Activated CD4-positive, alpha-beta memory T cell treated with anti-CD3 and anti-CD28 coated beads for 36 hours (primary cell): ENCODE measurements at regions of chr6 and their contacts with region 1.

Region 1: DNA sequence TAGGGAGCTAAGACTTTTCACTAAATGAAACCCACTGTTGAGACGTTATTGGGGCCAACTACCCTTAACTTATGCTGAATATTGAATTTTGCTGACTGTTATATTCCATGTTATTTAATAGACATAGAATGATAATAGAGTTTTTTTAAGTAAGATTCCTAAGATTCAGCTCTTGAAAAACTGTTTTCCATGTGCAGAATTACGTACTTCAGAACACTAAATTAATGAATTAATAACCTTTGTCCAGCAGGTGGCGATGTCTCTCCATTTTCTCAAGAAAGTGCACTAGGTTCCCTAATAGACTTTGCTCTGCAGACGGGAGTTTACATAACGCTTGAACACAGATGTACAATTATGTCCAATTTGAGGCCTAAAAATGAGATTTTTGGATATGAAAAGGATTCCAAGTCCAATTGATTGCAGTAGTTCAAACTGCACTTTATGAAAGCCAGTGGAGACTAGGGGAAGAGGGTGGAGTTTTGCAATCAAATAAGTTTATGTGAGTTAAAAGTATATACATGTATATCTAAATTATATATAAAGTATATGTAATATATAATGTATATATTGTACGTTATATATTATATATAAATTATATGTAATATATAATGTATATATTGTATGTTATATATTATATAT is 282.1 kb downstream of the UST start:
- DNase-seq: peak; percentile 65
- H3K4me3 Mint-ChIP-seq: peak overlapping the region; percentile 47
- H3K27ac Mint-ChIP-seq: peak overlapping the region; percentile 72
- H3K4me1 Mint-ChIP-seq: peaks cover 48% of the 10 kb centered on the region
- H3K27me3 Mint-ChIP-seq: no peaks in the 10 kb centered on the region

Region 2: DNA sequence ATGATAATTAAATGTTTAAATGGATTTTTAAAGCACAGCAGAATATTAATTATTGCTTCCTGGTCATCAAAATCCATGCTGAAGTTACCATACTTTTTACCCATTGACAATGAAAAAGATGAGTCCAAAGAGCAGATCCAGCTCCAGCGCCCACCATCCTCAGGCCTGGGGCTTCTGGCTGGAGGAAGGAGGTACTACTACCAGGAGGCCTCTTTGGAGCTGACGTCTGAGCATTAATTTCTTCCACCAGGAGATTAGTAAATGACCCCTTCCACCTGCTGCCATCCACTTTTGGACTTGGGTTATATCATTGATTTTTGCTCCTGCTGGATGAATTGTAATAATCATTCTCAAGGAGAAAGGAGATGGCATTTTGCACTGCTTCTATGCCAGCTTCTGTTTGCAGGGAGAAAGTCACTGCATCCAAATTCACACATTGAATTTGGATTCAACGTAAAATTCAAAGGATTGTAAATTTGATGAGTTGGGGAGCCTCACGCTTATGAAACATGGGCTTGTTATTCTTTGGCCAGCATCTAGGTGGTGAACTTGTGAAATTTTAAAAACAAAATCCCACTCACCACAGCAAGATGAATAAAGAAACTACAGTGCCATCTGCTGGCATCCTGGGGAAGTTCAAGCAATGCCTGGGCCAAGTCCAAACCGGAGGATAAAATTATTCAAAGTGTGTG is 564.4 kb before region 1 on chr6:
- CTCF ChIA-PET with region 1: no interaction called
- POLR2A ChIA-PET with region 1: no interaction called
- intact Hi-C with region 1: no loop called
- DNase-seq: peak; percentile 67
- H3K4me3 Mint-ChIP-seq: no peak overlapping the region
- H3K27ac Mint-ChIP-seq: no peak overlapping the region
- H3K4me1 Mint-ChIP-seq: no peaks in the 10 kb centered on the region
- H3K27me3 Mint-ChIP-seq: peaks cover 10% of the 10 kb centered on the region

Region 3: GRCh38 chr6:148578245-148578732 is 450.6 kb before region 1 on chr6:
- CTCF ChIA-PET with region 1: interaction called, 20 read pairs
- POLR2A ChIA-PET with region 1: no interaction called
- intact Hi-C with region 1: loop called (anchors 2 kb)
- DNase-seq: peak; percentile 73
- H3K4me3 Mint-ChIP-seq: no peak overlapping the region
- H3K27ac Mint-ChIP-seq: no peak overlapping the region
- H3K4me1 Mint-ChIP-seq: peaks cover 6% of the 10 kb centered on the region
- H3K27me3 Mint-ChIP-seq: peaks cover 27% of the 10 kb centered on the region

Region 4: GRCh38 chr6:148972481-148972880 is 56.4 kb before region 1 on chr6:
- CTCF ChIA-PET with region 1: no interaction called
- POLR2A ChIA-PET with region 1: no interaction called
- intact Hi-C with region 1: no loop called
- DNase-seq: peak; percentile 68
- H3K4me3 Mint-ChIP-seq: no peak overlapping the region
- H3K27ac Mint-ChIP-seq: no peak overlapping the region
- H3K4me1 Mint-ChIP-seq: no peaks in the 10 kb centered on the region
- H3K27me3 Mint-ChIP-seq: no peaks in the 10 kb centered on the region

Region 5: DNA sequence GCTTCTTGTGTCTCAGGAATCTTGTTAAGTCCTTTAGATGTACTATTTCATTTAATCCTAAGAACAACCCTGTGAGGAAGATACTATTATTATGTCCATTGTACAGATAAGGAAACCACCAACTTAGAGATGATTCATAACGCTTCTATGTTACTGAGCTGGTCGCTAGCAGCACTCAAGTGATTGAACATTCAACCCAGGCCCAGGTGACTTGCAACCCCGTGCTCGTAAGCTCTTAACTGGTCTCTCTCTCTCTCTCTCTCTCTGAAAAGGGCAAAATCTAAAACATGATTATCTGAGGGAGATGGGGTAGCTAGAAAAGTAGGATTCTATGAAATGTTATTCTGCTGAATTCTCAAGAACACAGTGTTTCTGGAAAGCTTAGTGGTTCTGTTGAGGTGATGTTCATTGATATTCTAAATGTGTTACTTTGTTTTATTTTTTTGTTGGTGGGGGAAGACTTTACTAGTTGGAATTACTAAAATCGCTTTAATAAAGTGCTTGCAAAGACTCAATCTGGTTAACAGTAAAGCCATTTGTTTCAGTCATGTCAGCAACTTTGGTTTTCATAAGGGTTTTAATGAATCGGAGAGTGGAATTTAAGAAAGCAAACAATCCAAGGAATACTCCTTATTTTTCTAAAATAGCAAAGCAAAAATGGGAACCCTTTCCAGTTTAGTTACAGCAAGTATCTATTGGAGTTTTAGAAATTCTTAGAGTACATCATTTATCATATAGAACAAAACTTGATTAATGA is 23.6 kb after region 1 on chr6:
- CTCF ChIA-PET with region 1: interaction called, 5 read pairs
- POLR2A ChIA-PET with region 1: interaction called, 10 read pairs
- intact Hi-C with region 1: no loop called
- DNase-seq: peak; percentile 42
- H3K4me3 Mint-ChIP-seq: peak overlapping the region; percentile 9
- H3K27ac Mint-ChIP-seq: peak overlapping the region; percentile 10
- H3K4me1 Mint-ChIP-seq: peaks cover 40% of the 10 kb centered on the region
- H3K27me3 Mint-ChIP-seq: no peaks in the 10 kb centered on the region

Region 6: DNA sequence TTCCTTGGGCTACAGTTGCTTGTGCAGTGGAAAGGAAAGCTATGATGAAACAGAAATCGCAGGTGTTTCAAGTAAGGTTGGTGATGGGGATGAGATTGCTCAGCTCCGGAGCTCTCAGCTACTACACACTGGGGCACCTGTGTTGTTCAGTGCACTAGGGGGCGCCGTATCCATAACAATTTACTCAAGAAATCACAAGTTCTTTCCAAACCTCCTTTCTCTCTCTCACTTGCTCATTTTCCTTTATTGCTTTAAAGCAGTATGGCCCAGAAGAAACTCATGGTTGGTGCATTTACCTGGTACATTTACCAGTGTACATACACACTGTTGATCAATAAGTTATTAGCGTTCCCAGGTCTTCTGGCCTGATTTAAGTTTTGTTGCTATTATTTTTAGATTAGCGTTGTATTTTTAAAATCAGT is 53.4 kb after region 1 on chr6:
- CTCF ChIA-PET with region 1: interaction called, 29 read pairs
- POLR2A ChIA-PET with region 1: interaction called, 62 read pairs
- intact Hi-C with region 1: loop called (anchors 1 kb)
- DNase-seq: peak; percentile 93
- H3K4me3 Mint-ChIP-seq: no peak overlapping the region
- H3K27ac Mint-ChIP-seq: peak overlapping the region; percentile 26
- H3K4me1 Mint-ChIP-seq: peaks cover 79% of the 10 kb centered on the region
- H3K27me3 Mint-ChIP-seq: no peaks in the 10 kb centered on the region

Region 7: GRCh38 chr6:149211046-149211571 is 182.2 kb after region 1 on chr6:
- CTCF ChIA-PET with region 1: no interaction called
- POLR2A ChIA-PET with region 1: interaction called, 6 read pairs
- intact Hi-C with region 1: loop called (anchors 5 kb)
- DNase-seq: peak; percentile 54
- H3K4me3 Mint-ChIP-seq: peak overlapping the region; percentile 53
- H3K27ac Mint-ChIP-seq: no peak overlapping the region
- H3K4me1 Mint-ChIP-seq: peaks cover 22% of the 10 kb centered on the region
- H3K27me3 Mint-ChIP-seq: no peaks in the 10 kb centered on the region

Region 8: GRCh38 chr6:149335924-149336608 is 307.2 kb after region 1 on chr6:
- CTCF ChIA-PET with region 1: interaction called, 8 read pairs
- POLR2A ChIA-PET with region 1: interaction called, 4 read pairs
- intact Hi-C with region 1: loop called (anchors 1 kb)
- DNase-seq: peak; percentile 75
- H3K4me3 Mint-ChIP-seq: peak overlapping the region; percentile 62
- H3K27ac Mint-ChIP-seq: peak overlapping the region; percentile 95
- H3K4me1 Mint-ChIP-seq: peaks cover 86% of the 10 kb centered on the region
- H3K27me3 Mint-ChIP-seq: no peaks in the 10 kb centered on the region

Region 9: GRCh38 chr6:149513915-149514314 is 485.0 kb after region 1 on chr6:
- CTCF ChIA-PET with region 1: interaction called, 6 read pairs
- POLR2A ChIA-PET with region 1: interaction called, 7 read pairs
- intact Hi-C with region 1: loop called (anchors 2 kb)
- DNase-seq: no peak
- H3K4me3 Mint-ChIP-seq: no peak overlapping the region
- H3K27ac Mint-ChIP-seq: peak overlapping the region; percentile 23
- H3K4me1 Mint-ChIP-seq: peaks cover 59% of the 10 kb centered on the region
- H3K27me3 Mint-ChIP-seq: no peaks in the 10 kb centered on the region